IMR-90 (cell line): ENCODE measurements at regions of chr4 and their contacts with region 1.

Region 1: DNA sequence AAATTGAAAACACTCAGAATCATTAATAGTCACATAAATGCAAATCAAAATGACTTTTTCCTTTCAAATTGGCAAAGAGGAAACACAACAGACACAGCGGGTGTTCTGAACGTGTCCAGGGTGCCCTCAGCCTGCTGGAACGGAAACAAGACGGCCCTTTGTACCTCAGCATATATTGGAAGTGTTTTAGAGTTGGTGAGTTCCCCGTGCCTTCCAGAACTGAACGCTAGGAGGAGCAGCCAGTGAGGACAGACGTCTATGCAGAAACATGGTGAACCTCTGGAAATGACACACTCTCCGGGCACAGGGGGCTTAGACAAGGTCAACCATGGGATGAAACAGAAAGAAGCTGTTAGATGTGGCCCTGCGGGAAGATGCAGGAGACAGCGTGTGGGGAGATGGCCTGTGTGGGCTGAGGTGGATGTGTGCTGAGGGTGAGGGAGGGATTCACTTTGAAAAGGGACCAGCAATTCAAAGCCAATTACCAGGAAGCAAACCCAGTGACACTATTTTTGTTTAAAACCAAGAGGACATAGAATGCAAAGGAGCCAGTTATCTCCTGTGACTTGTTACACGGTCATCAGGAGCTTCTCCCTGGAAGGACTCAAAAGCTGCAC is 40.4 kb downstream of the RNF212 start:
- DNase-seq: peak; percentile 53
- ATAC-seq: peak; percentile 96
- H3K4me3 ChIP-seq: no peak overlapping the region
- H3K27ac ChIP-seq: no peak overlapping the region
- H3K4me1 ChIP-seq: no peaks in the 10 kb centered on the region
- H3K27me3 ChIP-seq: peaks cover 32% of the 10 kb centered on the region
- CTCF ChIP-seq: peak; percentile 67
- POLR2A ChIP-seq: no peak
- RAD21 ChIP-seq: peak; percentile 62

Region 2: DNA sequence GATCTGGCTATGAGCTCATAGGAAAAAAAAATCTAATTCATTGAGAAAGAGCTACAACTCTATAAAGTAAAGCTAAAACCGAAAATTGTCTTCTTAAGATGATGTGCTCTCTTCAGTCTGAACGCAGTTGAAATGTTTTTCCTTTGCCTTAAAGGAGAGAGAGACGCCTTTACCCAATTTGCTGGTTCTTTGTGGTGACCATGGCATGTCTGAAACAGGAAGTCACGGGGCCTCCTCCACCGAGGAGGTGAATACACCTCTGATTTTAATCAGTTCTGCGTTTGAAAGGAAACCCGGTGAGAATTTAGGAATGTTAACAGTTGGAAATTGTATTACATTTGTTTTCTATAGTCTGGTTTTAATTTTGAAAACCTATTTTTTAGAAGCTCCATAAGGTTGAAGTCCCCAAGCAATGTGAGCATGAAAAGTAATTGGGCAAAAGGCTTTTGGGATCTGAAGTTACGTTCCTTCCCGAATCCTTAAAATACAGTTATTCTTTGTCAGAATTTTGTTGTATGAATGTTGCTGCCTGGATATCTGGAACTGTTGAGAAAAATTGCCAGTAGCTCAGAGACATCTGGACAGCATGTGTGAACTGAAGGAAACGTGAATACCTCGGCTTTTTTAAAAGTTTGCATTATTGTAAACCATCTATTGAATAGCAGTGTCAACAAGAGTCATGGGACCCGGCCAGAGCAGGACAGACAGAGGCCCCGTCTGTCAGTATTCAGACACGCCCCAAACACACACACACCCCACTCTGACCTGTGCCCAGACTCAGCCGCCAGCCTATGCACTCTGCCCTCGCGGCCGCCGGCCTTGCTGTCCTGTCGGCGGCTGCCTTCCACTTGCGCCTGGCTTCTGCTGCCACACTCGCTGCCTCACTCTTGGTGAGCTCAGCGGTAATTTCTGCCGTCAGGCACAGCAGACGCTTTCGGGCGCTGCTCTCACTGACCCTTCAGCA is 564.0 kb before region 1 on chr4:
- CTCF ChIA-PET with region 1: no interaction called
- POLR2A ChIA-PET with region 1: no interaction called
- dilution Hi-C with region 1: no loop called
- in situ Hi-C with region 1: no loop called
- intact Hi-C with region 1: no loop called
- DNase-seq: no peak
- ATAC-seq: no peak
- H3K4me3 ChIP-seq: no peak overlapping the region
- H3K27ac ChIP-seq: no peak overlapping the region
- H3K4me1 ChIP-seq: no peaks in the 10 kb centered on the region
- H3K27me3 ChIP-seq: no peaks in the 10 kb centered on the region
- CTCF ChIP-seq: no peak
- POLR2A ChIP-seq: no peak
- RAD21 ChIP-seq: no peak

Region 3: DNA sequence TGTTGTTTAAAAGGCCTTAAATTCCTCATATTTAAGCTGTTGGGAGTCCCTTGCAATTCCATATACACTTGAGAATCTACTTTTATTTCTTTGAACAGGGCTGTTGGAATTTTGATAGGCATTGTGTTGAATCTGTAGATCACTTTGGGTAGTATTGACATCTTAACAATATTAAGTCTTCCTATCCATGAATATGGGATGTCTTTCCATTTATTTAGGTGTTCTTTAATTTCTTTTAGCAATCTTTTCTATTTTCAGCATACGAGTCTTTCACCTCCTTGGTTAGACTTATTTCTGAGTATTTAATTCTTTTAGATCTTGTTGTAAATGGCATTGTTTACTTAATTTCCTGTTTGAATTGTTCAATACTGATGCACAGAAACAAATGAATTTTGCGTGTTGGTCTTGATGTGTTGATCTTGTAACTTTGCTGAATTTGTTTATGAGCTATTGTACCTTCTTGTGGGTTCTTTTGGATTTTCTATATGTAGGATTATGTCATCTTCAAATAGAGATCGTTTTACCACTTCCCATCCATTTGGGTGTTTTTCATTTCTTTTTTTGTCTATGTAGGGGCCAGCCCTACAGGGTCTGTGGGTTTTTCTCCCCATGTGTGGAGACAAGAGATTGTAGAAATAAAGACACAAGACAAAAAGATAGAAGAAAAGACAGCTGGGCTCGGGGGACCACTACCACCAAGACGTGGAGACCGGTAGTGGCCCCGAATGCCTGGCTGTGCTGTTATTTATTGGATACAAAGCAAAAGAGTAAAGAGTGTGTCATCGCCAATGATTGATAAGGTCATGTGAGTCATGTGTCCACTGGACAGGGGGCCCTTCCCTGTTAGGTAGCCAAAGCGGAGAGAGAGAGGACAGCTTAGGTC is 194.2 kb after region 1 on chr4:
- CTCF ChIA-PET with region 1: no interaction called
- POLR2A ChIA-PET with region 1: no interaction called
- dilution Hi-C with region 1: no loop called
- in situ Hi-C with region 1: no loop called
- intact Hi-C with region 1: loop called (anchors 2 kb)
- DNase-seq: no peak
- ATAC-seq: no peak
- H3K4me3 ChIP-seq: no peak overlapping the region
- H3K27ac ChIP-seq: no peak overlapping the region
- H3K4me1 ChIP-seq: no peaks in the 10 kb centered on the region
- H3K27me3 ChIP-seq: no peaks in the 10 kb centered on the region
- CTCF ChIP-seq: no peak
- POLR2A ChIP-seq: no peak
- RAD21 ChIP-seq: no peak